Ovary (tissue), 10 donors: ENCODE measurements at regions of chr17 and their contacts with region 1.

Region 1: GRCh38 chr17:66152756-66153155 is 39.2 kb downstream of the CEP112 start:
- DNase-seq: no peak
- H3K4me3 ChIP-seq: no peak overlapping the region
- H3K27ac ChIP-seq: no peak overlapping the region
- H3K4me1 ChIP-seq: no peaks in the 10 kb centered on the region
- H3K27me3 ChIP-seq: no peaks in the 10 kb centered on the region
- CTCF ChIP-seq: no peak
- EP300 ChIP-seq: no peak
- POLR2A ChIP-seq: no peak

Region 2: GRCh38 chr17:65287040-65287439 is 865.7 kb before region 1 on chr17:
- intact Hi-C with region 1: loop called in 1 of 4 experiments (anchors 5 kb)
- DNase-seq: no peak
- H3K4me3 ChIP-seq: no peak overlapping the region
- H3K27ac ChIP-seq: no peak overlapping the region
- H3K4me1 ChIP-seq: no peaks in the 10 kb centered on the region
- H3K27me3 ChIP-seq: no peaks in the 10 kb centered on the region
- CTCF ChIP-seq: no peak
- EP300 ChIP-seq: no peak
- POLR2A ChIP-seq: no peak

Region 3: DNA sequence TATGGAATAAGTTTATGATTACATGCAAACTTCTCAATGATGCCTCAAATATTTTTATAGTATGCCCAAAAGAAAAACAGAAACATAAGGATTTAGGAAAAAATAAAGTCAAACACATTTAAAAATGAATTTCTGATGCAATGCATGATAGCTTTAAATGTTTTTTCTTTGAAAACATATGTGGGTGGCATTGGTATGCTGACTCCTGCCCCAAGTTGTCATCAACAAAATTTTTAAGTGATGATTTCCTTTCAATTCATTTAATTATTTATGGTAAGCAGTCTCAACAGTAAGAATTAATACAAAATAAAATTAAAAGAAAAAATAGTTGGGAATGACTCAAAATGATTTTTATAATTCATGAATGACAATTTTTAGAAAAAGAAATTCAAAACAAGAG is 65.7 kb before region 1 on chr17:
- intact Hi-C with region 1: no loop called
- DNase-seq: no peak
- H3K4me3 ChIP-seq: no peak overlapping the region
- H3K27ac ChIP-seq: no peak overlapping the region
- H3K4me1 ChIP-seq: no peaks in the 10 kb centered on the region
- H3K27me3 ChIP-seq: no peaks in the 10 kb centered on the region
- CTCF ChIP-seq: no peak
- EP300 ChIP-seq: no peak
- POLR2A ChIP-seq: no peak